Left lung (tissue), 14 donors: ENCODE measurements at regions of chr16 and their contacts with region 1.

Region 1: GRCh38 chr16:23803591-23804123 is 32.1 kb upstream of the PRKCB start:
- DNase-seq: peak; percentile 20 to 88 (median 66)
- ATAC-seq: peak; percentile 86
- H3K4me3 ChIP-seq: no peak overlapping the region
- H3K27ac ChIP-seq: no peak overlapping the region
- H3K4me1 ChIP-seq: peaks cover 0 to 20% of the 10 kb centered on the region in 2 donors
- H3K27me3 ChIP-seq: peaks cover 0 to 7% of the 10 kb centered on the region in 2 donors
- CTCF ChIP-seq: peak; percentile 35 to 47

Region 2: GRCh38 chr16:24010440-24011089 is 206.9 kb after region 1 on chr16:
- intact Hi-C with region 1: loop called in 1 of 2 experiments (anchors 5 kb)
- DNase-seq: peak in 3 of 4 donors; percentile 66 to 82 (median 81)
- ATAC-seq: peak; percentile 94
- H3K4me3 ChIP-seq: no peak overlapping the region
- H3K27ac ChIP-seq: no peak overlapping the region
- H3K4me1 ChIP-seq: peaks cover 0 to 30% of the 10 kb centered on the region in 2 donors
- H3K27me3 ChIP-seq: peaks cover 0 to 3% of the 10 kb centered on the region in 2 donors
- CTCF ChIP-seq: peak; percentile 81 to 84